WTC11 (cell line): ENCODE measurements at regions of chr12 and their contacts with region 1.

Region 1: DNA sequence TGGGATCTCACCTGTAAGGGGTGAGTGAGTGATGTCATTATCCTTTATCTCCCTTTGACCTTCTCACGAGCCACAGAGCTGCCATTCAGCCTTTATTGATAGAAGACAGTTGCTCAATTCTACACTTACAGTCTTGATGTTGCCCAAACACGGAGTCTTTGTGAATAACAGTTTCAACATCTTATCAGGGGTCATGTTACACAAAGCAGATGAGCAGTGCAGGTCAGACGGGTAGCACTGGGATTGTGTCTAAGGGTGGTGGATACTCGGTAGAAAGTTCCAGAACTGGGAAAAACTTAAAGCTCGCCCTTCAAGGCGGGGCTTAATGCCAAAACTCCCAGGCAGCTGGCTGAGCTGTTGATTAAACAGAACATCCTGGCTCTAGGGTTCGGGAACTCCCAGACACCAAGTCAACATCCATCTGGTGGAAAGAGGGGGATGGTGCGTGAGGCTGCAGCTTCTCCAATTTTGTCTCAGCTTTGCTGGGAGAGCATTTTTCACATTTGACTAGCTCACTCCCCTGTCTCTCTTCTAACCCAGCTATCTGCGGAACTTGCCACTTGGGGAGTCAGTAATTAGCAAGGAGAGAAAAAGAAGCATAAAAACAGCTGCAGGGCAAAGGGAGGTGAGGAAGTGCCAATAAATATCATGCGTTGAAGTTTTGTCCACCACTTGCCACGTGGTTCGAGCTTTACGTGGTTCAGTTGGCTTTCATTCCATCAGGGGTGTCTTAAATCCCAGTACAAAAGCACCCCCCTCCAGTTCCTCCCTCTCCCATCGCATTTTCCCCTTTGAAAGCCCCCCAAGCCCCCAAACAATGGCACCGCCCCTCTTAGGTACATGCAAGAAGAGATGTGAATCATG is 31.0 kb downstream of the FOXN4 start:
- DNase-seq: no peak
- ATAC-seq: 0 out of 2 replicates have a peak, but pooled peaks have one; percentile 9
- H3K4me3 Mint-ChIP-seq: no peak overlapping the region
- H3K27ac Mint-ChIP-seq: no peak overlapping the region
- H3K4me1 Mint-ChIP-seq: peaks cover 17% of the 10 kb centered on the region
- H3K27me3 Mint-ChIP-seq: peaks cover 6% of the 10 kb centered on the region; the same call in 1 of the 2 replicates
- CTCF ChIP-seq: no peak

Region 2: DNA sequence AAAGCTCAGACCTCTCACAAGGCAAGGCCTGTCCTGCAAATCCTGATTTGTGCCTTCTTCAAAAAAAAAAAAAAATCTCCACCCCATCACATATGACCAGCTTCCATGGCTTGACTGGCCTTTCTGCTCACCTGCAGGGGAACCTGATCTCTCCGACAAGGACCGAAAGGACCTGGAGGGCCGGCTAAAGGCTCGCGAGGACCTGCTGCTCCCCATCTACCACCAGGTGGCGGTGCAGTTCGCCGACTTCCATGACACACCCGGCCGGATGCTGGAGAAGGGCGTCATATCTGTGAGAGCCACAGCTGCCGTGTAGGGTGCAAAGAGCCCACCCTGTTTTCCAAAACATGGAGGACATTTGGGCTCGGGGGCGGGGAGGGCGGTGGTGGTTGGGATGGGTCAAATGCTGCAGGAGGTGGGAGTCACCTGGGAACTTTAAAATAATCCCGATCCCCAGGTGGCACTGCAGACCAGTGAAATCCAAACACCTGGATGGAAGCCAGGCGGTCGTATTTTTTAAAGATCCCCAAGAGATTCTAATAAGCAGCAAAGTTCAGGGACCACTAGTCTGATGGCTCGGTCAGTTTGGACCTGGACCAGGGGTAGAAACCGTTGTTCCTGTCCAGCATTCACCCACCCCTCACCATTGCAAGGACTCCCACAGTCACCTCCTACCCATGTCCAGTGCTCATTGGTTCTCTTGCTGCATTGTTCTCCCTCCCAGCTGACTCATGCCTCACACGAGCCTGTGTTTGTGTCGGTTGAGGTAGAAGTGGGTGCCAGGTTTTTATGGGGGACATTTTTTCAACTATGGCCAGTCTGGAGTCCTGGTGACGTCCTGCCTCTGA is 13.8 kb before region 1 on chr12:
- CTCF ChIA-PET with region 1: interaction called, 18 read pairs
- POLR2A ChIA-PET with region 1: no interaction called
- DNase-seq: peak; percentile 95
- ATAC-seq: peak; percentile 90
- H3K4me3 Mint-ChIP-seq: no peak overlapping the region
- H3K27ac Mint-ChIP-seq: no peak overlapping the region
- H3K4me1 Mint-ChIP-seq: peaks cover 10% of the 10 kb centered on the region
- H3K27me3 Mint-ChIP-seq: no peaks in the 10 kb centered on the region
- CTCF ChIP-seq: peak; percentile 58; the same call in 1 of the 2 replicates